CD8-positive, alpha-beta T cell (primary cell): ENCODE measurements at regions of chr16 and their contacts with region 1.

Region 1: DNA sequence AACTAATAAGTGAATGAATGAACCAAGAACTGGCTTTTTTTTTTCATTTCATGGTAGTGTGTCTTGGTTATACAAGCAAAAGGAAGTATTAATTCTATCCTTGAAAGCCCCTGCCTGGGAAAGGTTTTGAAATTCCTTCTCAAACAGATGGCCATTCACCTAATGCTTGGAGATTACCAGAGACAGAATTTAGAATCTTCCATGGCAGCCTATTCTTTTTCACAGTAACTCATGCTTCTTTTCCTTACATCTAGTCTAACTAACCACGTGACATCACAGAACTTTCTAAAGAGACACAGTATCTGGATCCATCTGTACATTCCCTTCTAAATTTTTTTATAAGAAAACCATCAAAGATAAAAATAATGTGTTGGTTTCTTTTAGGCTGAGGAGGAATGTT is 151.6 kb downstream of the FTO start:
- DNase-seq: no peak
- ATAC-seq: no peak
- H3K4me3 ChIP-seq: no peak overlapping the region
- H3K4me3 Mint-ChIP-seq: no peak overlapping the region
- H3K27ac ChIP-seq: no peak overlapping the region
- H3K27ac Mint-ChIP-seq: no peak overlapping the region
- H3K4me1 ChIP-seq: no peaks in the 10 kb centered on the region
- H3K4me1 Mint-ChIP-seq: no peaks in the 10 kb centered on the region
- H3K27me3 ChIP-seq: no peaks in the 10 kb centered on the region
- H3K27me3 Mint-ChIP-seq: no peaks in the 10 kb centered on the region
- CTCF ChIP-seq: no peak

Region 2: DNA sequence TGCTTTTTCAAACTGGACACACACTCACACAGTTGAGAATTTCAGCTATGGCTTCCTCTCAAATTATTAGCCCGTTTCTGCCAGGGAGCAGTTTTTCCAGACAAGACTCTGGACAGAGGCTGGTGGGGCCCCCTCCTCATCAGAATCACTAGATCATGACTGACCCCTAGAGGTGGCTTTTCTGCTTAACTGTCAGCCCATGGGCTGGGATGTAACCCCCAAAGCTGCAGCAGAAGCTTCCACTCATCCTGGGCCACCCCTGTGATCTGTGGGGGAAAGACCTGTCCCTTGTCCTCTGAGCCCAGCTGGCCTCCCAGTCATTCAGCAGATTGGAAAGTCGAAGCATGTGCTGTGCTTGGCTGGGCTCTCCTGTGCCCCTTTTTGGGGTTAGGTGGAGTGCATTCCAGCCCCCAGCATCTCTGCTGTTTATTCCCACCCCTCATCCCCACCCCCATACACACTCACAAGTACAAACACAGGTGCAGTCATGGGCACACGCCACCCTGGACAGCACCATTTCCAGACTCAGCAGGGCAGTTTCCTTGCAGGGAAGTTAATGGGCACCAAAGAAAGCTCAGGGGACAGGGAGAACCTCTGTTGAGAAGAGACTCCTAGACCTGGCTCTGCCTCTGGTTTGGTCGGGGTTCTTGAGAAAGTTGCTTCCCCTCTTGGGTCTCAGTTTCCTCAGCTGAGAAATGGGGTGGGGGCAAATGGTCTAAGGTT is 498.9 kb before region 1 on chr16:
- CTCF ChIA-PET with region 1: no interaction called
- POLR2A ChIA-PET with region 1: no interaction called
- intact Hi-C with region 1: loop called in 1 of 2 experiments (anchors 5 kb)
- DNase-seq: no peak
- ATAC-seq: no peak
- H3K4me3 ChIP-seq: no peak overlapping the region
- H3K4me3 Mint-ChIP-seq: no peak overlapping the region
- H3K27ac ChIP-seq: no peak overlapping the region
- H3K27ac Mint-ChIP-seq: no peak overlapping the region
- H3K4me1 ChIP-seq: no peaks in the 10 kb centered on the region
- H3K4me1 Mint-ChIP-seq: no peaks in the 10 kb centered on the region
- H3K27me3 ChIP-seq: no peaks in the 10 kb centered on the region
- H3K27me3 Mint-ChIP-seq: peaks cover 7% of the 10 kb centered on the region
- CTCF ChIP-seq: no peak